CD4-positive, alpha-beta T cell (primary cell): ENCODE measurements at regions of chr17 and their contacts with region 1.

Region 1: GRCh38 chr17:39653662-39654331 is 11.4 kb upstream of the TCAP start:
- DNase-seq: peak; percentile 70 to 87 (median 77)
- ATAC-seq: peak; percentile 84
- H3K4me3 ChIP-seq: no peak overlapping the region
- H3K4me3 Mint-ChIP-seq: no peak overlapping the region
- H3K27ac ChIP-seq: no peak overlapping the region
- H3K27ac Mint-ChIP-seq: peak overlapping the region; percentile 70
- H3K4me1 ChIP-seq: peaks cover 28% of the 10 kb centered on the region
- H3K4me1 Mint-ChIP-seq: peaks cover 61% of the 10 kb centered on the region
- H3K27me3 ChIP-seq: no peaks in the 10 kb centered on the region
- H3K27me3 Mint-ChIP-seq: no peaks in the 10 kb centered on the region
- CTCF ChIP-seq: peak; percentile 97

Region 2: DNA sequence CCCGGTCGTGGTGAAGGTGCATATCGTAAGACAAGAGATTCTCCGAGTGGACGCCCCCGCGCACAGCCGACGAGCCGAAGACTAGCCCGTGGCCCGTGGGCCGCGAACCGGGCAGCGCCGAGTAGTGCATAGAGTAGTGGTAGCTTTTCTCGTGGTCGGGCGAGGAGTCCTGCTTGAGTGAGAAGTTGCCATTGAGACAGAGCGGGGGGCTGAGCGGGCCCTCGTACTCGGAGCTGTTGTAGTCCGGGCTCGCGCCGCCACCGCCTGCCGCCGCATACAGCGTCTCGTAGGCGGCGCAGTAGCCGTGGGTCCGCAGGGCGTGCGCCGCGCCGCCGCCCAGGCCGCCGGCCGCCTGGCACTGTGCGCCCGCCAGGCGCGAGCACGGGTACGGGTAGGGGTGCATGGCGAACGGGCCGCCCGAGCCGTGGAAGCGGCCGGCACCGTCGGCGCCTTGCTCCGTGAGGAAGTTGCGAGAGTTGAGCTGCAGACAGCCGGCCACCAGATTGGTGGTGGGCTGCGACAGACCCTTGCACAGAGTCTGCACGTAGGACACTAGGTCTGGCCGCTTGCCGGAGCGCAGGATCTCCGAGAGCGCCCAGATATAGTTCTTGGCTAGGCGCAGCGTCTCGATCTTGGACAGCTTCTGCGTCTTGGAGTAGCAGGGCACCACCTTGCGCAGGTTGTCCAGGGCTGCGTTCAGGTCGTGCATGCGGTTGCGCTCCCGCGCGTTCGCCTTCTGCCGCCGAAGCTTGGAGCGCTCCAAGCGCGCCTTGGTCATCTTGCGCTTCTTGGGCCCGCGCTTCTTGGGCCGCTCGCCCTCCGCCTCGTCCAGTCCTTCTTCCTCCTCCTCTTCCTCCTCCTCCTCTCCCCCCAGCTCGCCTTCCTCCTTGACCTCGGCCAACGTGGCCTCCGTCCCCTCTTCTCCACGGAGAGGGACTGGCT is 48.0 kb before region 1 on chr17:
- CTCF ChIA-PET with region 1: no interaction called
- POLR2A ChIA-PET with region 1: no interaction called
- intact Hi-C with region 1: no loop called
- DNase-seq: peak in 1 of 14 experiments; percentile 27
- ATAC-seq: no peak
- H3K4me3 ChIP-seq: no peak overlapping the region
- H3K4me3 Mint-ChIP-seq: peak overlapping the region; percentile 7
- H3K27ac ChIP-seq: no peak overlapping the region
- H3K27ac Mint-ChIP-seq: no peak overlapping the region
- H3K4me1 ChIP-seq: peaks cover 48% of the 10 kb centered on the region
- H3K4me1 Mint-ChIP-seq: peaks cover 20% of the 10 kb centered on the region
- H3K27me3 ChIP-seq: peaks cover 76 to 88% of the 10 kb centered on the region in 2 experiments
- H3K27me3 Mint-ChIP-seq: peaks cover 80% of the 10 kb centered on the region
- CTCF ChIP-seq: no peak

Region 3: GRCh38 chr17:39668199-39668966 is 14.6 kb after region 1 on chr17 and contains the start of gene PNMT:
- CTCF ChIA-PET with region 1: interaction called, 21 read pairs
- POLR2A ChIA-PET with region 1: interaction called, 7 read pairs
- intact Hi-C with region 1: no loop called
- DNase-seq: peak; percentile 42 to 85 (median 62)
- ATAC-seq: peak; percentile 80
- H3K4me3 ChIP-seq: peak within 1 kb of the TSS; percentile 32
- H3K4me3 Mint-ChIP-seq: peak within 1 kb of the TSS; percentile 59
- H3K27ac ChIP-seq: no peak within 1 kb of the TSS
- H3K27ac Mint-ChIP-seq: no peak within 1 kb of the TSS
- H3K4me1 ChIP-seq: peaks cover 35% of the 10 kb centered on the region
- H3K4me1 Mint-ChIP-seq: peaks cover 15% of the 10 kb centered on the region
- H3K27me3 ChIP-seq: peaks cover 15 to 34% of the 10 kb centered on the region in 2 experiments
- H3K27me3 Mint-ChIP-seq: peaks cover 34% of the 10 kb centered on the region
- CTCF ChIP-seq: peak; percentile 78
- total RNA-seq, gene PNMT: 0.47 TPM in 1 of 2 experiments, not detected in the other